Natural killer cell (primary cell): ENCODE measurements at regions of chr17 and their contacts with region 1.

Region 1: DNA sequence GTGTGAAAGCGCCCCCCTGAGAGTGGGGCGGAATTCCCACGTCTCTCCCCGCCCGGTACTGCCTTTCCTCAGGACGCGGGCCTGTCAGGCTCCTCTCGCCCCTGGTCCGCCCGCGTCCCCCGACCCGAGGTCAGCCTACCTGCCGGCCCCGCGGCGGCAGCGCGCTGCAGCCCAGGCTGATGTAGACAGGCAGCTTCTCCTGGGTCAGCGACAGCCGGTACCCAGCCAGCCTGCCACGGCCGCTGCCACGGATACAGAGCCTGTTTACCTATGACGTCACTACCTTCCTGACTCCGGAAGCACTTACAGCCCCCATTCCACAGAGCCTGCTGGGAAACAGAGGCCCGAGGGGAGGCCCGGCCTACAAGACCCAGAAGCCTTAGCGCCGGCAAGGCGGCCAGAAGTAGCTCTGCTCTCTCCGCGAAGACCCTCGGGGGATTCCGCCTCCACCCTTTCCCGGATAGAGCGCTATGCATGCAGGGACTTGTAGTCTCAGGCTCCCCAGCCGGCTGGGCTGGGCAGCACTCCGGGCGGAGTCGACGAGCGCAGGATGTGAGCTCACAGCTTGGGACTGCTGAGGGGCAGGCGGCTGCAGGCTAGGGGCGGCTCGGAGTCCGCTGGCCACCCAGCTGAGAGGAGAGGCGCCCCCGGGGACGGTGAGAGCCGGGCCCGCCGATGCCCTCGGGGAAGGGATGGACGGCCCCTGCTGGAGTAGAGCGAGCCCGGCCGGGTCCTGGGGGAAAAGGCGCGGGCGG is at the starts of genes IFT20 and TNFAIP1:
- DNase-seq: peak; percentile 92 to 99
- ATAC-seq: peak; percentile 94 to 99 (median 94)
- H3K4me3 ChIP-seq: peak within 1 kb of the TSS; percentile 74
- H3K4me3 Mint-ChIP-seq: peak within 1 kb of the TSS; percentile 99
- H3K27ac ChIP-seq: peak within 1 kb of the TSS; percentile 90
- H3K27ac Mint-ChIP-seq: peak within 1 kb of the TSS; percentile 94 to 100
- H3K4me1 ChIP-seq: peaks cover 20% of the 10 kb centered on the region
- H3K4me1 Mint-ChIP-seq: peaks cover 25 to 49% of the 10 kb centered on the region in 2 donors
- H3K27me3 ChIP-seq: no peaks in the 10 kb centered on the region
- H3K27me3 Mint-ChIP-seq: no peaks in the 10 kb centered on the region
- CTCF ChIP-seq: no peak
- total RNA-seq, gene IFT20: 50.0 to 109 (median 68.6) TPM
- total RNA-seq, gene TNFAIP1: 10.5 to 15.7 (median 14.6) TPM

Region 2: DNA sequence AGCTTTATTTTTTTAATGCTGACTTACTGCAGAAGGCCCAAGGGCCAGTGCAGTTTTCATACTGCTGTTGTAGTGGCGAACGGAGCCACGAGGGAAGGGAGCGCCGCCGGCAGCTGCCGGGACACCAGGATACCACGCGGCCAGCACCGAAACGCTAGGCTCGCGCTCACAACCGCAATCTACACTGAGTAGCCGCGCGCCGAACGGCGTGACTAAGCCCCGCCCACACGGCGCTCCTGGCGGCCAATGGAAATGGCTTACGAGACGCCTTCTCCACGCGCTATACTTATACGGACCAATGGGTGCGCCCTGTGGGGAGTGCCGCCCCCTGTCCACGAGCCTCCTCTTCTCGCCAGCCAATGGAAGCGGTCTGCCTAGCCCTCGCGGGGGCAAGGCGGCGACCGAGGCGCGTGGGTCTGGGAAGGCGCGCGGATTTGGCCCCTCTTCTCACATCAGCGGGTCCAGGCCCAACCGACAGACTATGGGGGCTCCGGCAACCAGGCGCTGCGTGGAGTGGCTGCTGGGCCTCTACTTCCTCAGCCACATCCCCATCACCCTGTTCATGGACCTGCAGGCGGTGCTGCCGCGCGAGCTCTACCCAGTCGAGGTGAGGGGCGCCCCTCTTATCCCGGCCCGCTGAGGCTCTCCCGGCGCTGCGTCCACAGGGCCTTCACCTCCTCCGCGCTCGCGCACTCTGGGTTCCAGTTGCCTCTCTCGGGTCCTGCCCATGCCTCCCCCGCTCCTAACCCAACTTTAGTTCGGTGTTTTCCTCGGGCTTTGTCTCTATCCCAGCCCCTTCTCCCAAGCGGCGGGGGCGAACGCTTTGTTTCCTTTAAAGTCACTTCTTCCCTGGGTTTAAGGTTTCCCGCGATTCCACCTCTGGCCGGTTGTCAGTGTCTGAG is 16.4 kb before region 1 on chr17 and contains the start of gene TMEM97:
- intact Hi-C with region 1: loop called (anchors 1 kb)
- DNase-seq: peak; percentile 94 to 97
- ATAC-seq: peak; percentile 97 to 99 (median 98)
- H3K4me3 ChIP-seq: peak within 1 kb of the TSS; percentile 77
- H3K4me3 Mint-ChIP-seq: peak within 1 kb of the TSS; percentile 89
- H3K27ac ChIP-seq: peak within 1 kb of the TSS; percentile 19
- H3K27ac Mint-ChIP-seq: peak within 1 kb of the TSS; percentile 78 to 90
- H3K4me1 ChIP-seq: peaks cover 18% of the 10 kb centered on the region
- H3K4me1 Mint-ChIP-seq: peaks cover 25 to 28% of the 10 kb centered on the region in 2 donors
- H3K27me3 ChIP-seq: no peaks in the 10 kb centered on the region
- H3K27me3 Mint-ChIP-seq: no peaks in the 10 kb centered on the region
- CTCF ChIP-seq: no peak
- total RNA-seq, gene TMEM97: 4.6 to 8.8 (median 7.5) TPM

Region 3: DNA sequence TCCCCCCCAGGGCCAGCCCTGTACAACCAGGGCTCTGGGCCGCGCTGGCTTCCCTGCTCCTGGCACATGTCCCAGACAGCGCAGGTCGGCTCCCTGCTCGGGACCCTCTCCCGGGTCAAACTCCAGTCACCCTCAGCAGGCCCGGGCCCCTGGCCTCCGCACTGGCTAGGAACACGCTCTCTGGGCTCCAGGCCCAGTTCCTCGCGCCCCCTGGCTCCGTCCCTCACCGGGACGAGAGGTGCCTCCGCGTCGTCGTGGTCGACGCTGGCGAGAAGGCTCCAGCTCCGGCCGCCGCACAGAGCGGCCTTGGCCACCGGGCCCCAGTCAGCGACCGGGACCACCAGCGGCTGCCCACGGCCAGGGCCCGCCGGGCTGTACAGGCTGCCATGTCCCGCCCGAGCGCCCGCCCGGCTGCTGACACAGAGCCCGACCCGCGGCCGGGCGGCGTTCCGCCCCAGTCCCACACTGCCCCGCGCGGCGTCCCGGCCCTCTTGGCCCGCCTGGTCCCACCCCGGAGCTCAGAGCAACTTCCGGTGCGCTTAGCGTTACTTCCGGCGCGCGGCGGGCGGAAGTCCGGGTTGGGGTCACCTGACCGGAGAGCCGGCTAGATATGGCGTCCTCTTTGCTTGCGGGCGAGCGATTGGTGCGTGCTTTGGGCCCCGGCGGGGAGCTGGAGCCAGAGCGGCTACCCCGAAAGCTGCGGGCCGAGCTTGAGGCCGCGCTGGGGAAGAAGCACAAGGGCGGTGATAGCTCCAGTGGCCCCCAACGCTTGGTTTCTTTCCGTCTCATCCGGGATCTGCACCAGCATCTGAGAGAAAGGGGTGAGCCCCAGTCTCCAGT is 21.9 kb after region 1 on chr17 and contains the start of gene POLDIP2:
- intact Hi-C with region 1: loop called (anchors 1 kb)
- DNase-seq: peak; percentile 95 to 97
- ATAC-seq: peak; percentile 98 to 100 (median 98)
- H3K4me3 ChIP-seq: peak within 1 kb of the TSS; percentile 76
- H3K4me3 Mint-ChIP-seq: peak within 1 kb of the TSS; percentile 97
- H3K27ac ChIP-seq: peak within 1 kb of the TSS; percentile 78
- H3K27ac Mint-ChIP-seq: peak within 1 kb of the TSS; percentile 94
- H3K4me1 ChIP-seq: peaks cover 15% of the 10 kb centered on the region
- H3K4me1 Mint-ChIP-seq: peaks cover 24 to 26% of the 10 kb centered on the region in 2 donors
- H3K27me3 ChIP-seq: no peaks in the 10 kb centered on the region
- H3K27me3 Mint-ChIP-seq: no peaks in the 10 kb centered on the region
- CTCF ChIP-seq: no peak
- total RNA-seq, gene POLDIP2: 30.8 to 37.0 (median 33.7) TPM

Region 4: DNA sequence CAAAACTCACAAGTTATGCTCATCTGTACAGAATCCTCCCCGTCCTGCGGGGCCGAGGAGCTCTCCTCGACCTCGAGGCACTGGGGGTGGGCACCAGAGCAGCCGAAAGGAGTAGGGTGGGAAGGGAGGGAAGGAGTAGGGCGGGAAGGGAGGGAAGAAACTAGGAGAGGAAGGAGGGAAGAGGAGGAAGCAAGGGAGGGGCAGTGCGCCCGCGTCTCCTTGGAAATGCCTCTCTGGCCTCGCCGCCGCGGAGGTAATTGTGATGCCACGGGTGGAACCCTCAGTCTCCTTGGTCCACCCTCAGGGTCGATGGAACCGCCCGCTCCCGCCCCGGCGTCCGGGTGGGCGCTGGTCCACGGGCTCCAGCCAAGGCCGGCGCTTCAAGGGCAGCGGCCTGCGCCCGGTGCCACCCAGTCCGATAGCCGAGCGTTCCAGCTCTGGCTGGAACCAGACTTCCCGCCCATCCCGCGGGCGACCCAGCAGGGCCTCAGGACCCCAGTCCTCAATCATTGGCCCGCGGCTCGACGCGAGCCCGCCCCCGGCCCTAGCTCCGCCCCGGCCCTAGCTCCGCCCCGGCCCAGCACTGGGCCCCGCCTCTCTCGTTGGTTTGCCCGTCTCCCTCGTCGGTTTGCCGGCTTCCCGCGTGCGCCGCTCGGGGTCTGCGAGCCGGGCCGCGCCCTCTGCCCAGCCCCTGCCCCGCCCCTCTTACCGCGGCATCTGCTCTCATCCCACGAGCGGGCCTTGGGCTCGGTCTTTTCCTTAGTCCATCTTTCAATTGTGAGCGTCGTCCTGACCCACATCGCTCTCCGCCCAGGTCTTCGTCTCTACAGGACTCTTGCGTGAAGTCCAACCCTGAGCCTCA is 375.7 kb after region 1 on chr17:
- intact Hi-C with region 1: loop called (anchors 10 kb)
- DNase-seq: peak; percentile 78 to 89
- ATAC-seq: peak; percentile 92 to 94 (median 94)
- H3K4me3 ChIP-seq: peak overlapping the region; percentile 62
- H3K4me3 Mint-ChIP-seq: peak overlapping the region; percentile 93
- H3K27ac ChIP-seq: peak overlapping the region; percentile 82
- H3K27ac Mint-ChIP-seq: peak overlapping the region; percentile 80 to 88
- H3K4me1 ChIP-seq: peaks cover 21% of the 10 kb centered on the region
- H3K4me1 Mint-ChIP-seq: peaks cover 18 to 20% of the 10 kb centered on the region in 2 donors
- H3K27me3 ChIP-seq: peaks cover 2% of the 10 kb centered on the region
- H3K27me3 Mint-ChIP-seq: peaks cover 15 to 16% of the 10 kb centered on the region in 2 donors
- CTCF ChIP-seq: no peak

Region 5: GRCh38 chr17:29078183-29079045 is 743.0 kb after region 1 on chr17:
- intact Hi-C with region 1: no loop called
- DNase-seq: no peak
- ATAC-seq: no peak
- H3K4me3 ChIP-seq: no peak overlapping the region
- H3K4me3 Mint-ChIP-seq: no peak overlapping the region
- H3K27ac ChIP-seq: no peak overlapping the region
- H3K27ac Mint-ChIP-seq: no peak overlapping the region
- H3K4me1 ChIP-seq: peaks cover 17% of the 10 kb centered on the region
- H3K4me1 Mint-ChIP-seq: peaks cover 19 to 25% of the 10 kb centered on the region in 2 donors
- H3K27me3 ChIP-seq: no peaks in the 10 kb centered on the region
- H3K27me3 Mint-ChIP-seq: no peaks in the 10 kb centered on the region
- CTCF ChIP-seq: no peak